ENCODE measurements at regions of chr20 and their contacts with region 1.

Region 1: DNA sequence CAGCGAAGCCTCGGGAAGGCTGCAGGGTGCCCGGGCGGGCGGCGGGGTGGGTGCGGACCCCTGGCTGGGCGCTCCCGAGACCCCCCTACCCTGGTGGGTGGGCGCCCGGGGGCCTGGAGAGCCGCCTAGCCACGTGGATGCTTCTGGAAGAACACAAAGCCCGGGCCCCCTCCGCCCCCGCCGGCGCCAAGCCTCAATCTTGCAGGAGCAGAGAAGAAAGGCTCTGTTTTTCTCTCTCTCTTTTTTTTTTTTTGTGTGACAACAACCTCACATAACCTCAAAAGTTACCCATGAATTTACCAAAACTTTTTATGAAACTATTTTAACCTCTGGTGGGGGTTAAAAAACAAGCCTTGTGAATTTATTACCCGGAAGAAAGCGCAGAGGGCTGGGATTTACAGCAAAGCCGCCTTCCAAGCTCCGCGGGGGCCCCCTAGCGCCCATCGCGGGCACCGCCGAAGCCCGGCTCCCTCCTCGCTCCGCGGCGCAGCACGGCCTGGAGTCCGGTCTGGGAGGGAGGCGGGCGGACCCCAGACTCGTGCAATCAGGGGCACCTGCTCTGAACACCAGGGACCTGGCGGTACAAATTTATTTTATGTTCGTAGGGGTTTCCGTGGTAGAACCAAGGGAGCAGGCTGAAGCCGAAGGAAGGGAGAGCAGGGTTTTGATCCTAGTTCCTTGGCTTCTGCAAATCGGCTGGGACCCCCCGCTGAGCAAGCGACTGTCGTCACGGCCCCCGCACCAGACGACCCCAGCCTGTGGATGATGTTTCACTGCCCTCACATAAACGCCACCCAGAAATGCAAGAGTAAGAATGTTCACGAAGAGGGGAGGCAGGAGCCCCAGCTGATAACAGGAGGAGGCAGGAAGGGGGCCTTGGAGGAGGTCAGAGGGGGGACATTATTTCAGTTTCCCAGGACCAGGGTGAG is 58.9 kb downstream of the ZNF831 start:
- DNase-seq: peak; percentile 84
- ATAC-seq: peak; percentile 97
- H3K4me3 Mint-ChIP-seq: peak overlapping the region; percentile 84
- H3K27ac Mint-ChIP-seq: no peak overlapping the region
- H3K4me1 Mint-ChIP-seq: peaks cover 11% of the 10 kb centered on the region
- H3K27me3 Mint-ChIP-seq: peaks cover 9% of the 10 kb centered on the region
- CTCF ChIP-seq: peak; percentile 83

Region 2: GRCh38 chr20:58864350-58864749 is 358.2 kb before region 1 on chr20:
- CTCF ChIA-PET with region 1: interaction called, 29 read pairs
- POLR2A ChIA-PET with region 1: no interaction called
- intact Hi-C with region 1: loop called (anchors 1 kb)
- DNase-seq: no peak
- ATAC-seq: peak; percentile 54
- H3K4me3 Mint-ChIP-seq: no peak overlapping the region
- H3K27ac Mint-ChIP-seq: no peak overlapping the region
- H3K4me1 Mint-ChIP-seq: no peaks in the 10 kb centered on the region
- H3K27me3 Mint-ChIP-seq: peaks cover 22% of the 10 kb centered on the region
- CTCF ChIP-seq: no peak

Region 3: DNA sequence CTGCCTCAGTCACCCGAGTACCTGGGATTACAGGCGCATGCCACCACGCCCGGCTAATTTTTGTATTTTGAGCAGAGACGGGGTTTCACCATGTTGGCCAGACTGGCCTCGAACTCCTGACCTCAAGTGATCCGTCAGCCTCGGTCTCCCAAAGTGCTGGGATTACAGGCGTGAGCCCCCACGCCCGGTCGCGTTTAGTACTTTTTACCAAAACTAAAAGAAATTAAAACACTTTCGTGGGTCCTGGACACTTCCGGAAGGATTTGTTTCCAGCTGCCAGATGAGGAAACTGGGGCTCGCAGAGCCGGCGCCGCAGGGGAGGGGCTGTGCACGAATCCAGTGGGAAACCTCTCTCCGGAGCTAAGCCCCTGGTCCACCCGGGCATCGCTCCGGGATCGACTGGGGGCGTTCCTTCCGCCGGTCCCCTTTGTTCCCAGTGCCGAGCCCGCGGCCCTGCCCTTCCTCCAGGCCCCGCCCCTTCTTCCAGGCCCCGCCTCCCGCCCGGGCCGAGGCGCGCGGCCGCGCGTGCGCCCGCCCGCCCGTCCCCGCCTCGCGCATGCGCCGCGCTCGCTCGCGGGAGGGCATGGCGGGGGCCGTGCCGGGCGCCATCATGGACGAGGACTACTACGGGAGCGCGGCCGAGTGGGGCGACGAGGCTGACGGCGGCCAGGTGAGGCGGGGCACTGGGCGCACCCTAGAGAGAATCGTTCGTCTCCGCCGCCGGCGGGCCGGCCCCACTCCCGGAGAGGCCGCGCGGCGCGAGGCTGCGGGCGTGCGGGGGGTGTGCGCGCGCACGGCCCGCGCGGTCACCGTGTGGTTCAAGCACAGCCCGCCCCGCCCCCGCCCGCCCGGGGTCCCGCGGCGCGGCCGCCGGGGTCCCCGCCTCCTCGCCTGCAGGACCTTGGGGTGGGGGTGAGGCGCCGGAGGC is 241.6 kb before region 1 on chr20 and contains the start of gene NELFCD:
- CTCF ChIA-PET with region 1: no interaction called
- POLR2A ChIA-PET with region 1: no interaction called
- intact Hi-C with region 1: loop called (anchors 5 kb)
- DNase-seq: peak; percentile 95
- ATAC-seq: peak; percentile 89
- H3K4me3 Mint-ChIP-seq: peak within 1 kb of the TSS; percentile 91
- H3K27ac Mint-ChIP-seq: peak within 1 kb of the TSS; percentile 80
- H3K4me1 Mint-ChIP-seq: peaks cover 45% of the 10 kb centered on the region
- H3K27me3 Mint-ChIP-seq: no peaks in the 10 kb centered on the region
- CTCF ChIP-seq: no peak
- total RNA-seq, gene NELFCD: 97.2 and 107 TPM in 2 replicates

Region 4: GRCh38 chr20:59087829-59088433 is 134.6 kb before region 1 on chr20:
- CTCF ChIA-PET with region 1: interaction called, 48 read pairs
- POLR2A ChIA-PET with region 1: interaction called, 8 read pairs
- intact Hi-C with region 1: loop called (anchors 1 kb)
- DNase-seq: peak; percentile 70
- ATAC-seq: peak; percentile 82
- H3K4me3 Mint-ChIP-seq: no peak overlapping the region
- H3K27ac Mint-ChIP-seq: peak overlapping the region; percentile 5
- H3K4me1 Mint-ChIP-seq: peaks cover 12% of the 10 kb centered on the region
- H3K27me3 Mint-ChIP-seq: peaks cover 14% of the 10 kb centered on the region
- CTCF ChIP-seq: peak; percentile 55

Region 5: GRCh38 chr20:59495894-59496510 is 273.5 kb after region 1 on chr20:
- CTCF ChIA-PET with region 1: no interaction called
- POLR2A ChIA-PET with region 1: no interaction called
- intact Hi-C with region 1: loop called (anchors 2 kb)
- DNase-seq: peak; percentile 59
- ATAC-seq: peak; percentile 40
- H3K4me3 Mint-ChIP-seq: no peak overlapping the region
- H3K27ac Mint-ChIP-seq: no peak overlapping the region
- H3K4me1 Mint-ChIP-seq: no peaks in the 10 kb centered on the region
- H3K27me3 Mint-ChIP-seq: peaks cover 16% of the 10 kb centered on the region
- CTCF ChIP-seq: peak; percentile 92